ENCODE measurements at regions of chr14 and their contacts with region 1.

Region 1: DNA sequence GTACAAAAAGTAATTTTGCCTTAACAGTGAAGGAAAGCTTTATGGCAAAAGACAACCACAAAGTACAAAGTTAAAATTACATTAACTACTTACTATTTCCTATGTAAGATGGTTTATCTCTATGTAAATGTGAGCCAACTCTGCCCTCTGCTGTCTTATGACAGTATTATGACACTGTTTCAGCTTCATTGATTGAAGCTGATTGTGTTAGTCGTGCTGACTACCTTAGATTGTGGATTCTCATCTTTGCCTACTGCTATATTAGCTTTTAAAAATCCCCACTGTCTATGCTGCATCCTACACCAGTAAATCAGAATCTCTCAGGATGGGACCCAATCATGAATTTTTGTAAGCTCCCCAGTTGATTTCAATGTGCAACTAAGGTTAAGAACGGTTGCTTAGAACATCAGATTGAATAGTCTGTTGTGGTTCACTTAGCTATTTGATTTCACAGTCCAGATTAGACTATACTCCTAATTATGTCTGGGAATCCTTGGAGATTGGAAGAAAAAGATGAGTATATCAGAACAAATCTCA is 12.2 kb upstream of the SPTB start:
- DNase-seq: peak; percentile 43
- H3K4me3 ChIP-seq: no peak overlapping the region
- H3K27ac ChIP-seq: no peak overlapping the region
- H3K4me1 ChIP-seq: no peaks in the 10 kb centered on the region
- H3K27me3 ChIP-seq: peaks cover 2% of the 10 kb centered on the region
- CTCF ChIP-seq: peak; percentile 44 to 59

Region 2: DNA sequence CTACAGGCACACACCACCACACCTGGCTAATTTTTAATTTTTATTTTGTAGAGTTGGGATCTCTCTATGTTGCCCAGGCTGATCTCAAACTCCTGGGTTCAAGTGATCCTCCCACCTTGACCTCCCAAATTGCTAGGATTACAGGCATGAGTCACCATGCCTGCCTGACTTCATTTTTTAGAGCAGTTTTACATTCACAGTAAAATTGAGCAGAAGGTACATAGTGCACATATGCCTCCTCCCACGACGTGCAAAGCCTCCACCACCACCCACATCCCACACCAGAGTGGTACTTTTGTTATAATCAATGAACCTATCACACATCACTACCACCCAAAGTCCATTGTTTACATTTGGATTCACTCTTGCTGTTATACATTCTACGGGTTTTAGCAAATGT is 250.2 kb before region 1 on chr14:
- CTCF ChIA-PET with region 1: interaction called, 13 read pairs
- dilution Hi-C with region 1: no loop called
- in situ Hi-C with region 1: no loop called
- intact Hi-C with region 1: no loop called
- DNase-seq: no peak
- H3K4me3 ChIP-seq: no peak overlapping the region
- H3K27ac ChIP-seq: no peak overlapping the region
- H3K4me1 ChIP-seq: peaks cover 16% of the 10 kb centered on the region
- H3K27me3 ChIP-seq: no peaks in the 10 kb centered on the region
- CTCF ChIP-seq: no peak

Region 3: DNA sequence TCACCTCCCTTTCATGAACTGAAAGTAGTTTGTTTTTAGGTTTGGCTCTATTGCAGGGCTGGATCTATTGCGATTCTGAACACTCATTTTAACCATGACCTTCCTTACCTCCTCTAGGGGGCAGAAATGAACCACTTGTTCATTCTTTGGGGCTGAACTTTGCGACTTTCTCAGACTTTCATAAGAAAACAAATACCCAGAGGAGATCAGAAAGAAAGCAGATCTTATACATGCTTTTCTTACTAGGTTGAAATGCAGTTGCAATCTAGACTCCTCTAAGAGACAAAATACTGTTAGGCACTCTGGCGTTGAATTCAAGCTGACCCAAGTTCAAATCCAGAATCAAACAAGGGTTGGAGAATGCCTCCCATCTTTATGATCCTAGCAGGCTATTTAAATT is 220.3 kb before region 1 on chr14:
- CTCF ChIA-PET with region 1: no interaction called
- dilution Hi-C with region 1: no loop called
- in situ Hi-C with region 1: loop called (anchors 10 to 25 kb)
- intact Hi-C with region 1: loop called (anchors 5 kb)
- DNase-seq: peak; percentile 60
- H3K4me3 ChIP-seq: no peak overlapping the region
- H3K27ac ChIP-seq: no peak overlapping the region
- H3K4me1 ChIP-seq: peaks cover 27% of the 10 kb centered on the region
- H3K27me3 ChIP-seq: no peaks in the 10 kb centered on the region
- CTCF ChIP-seq: peak; percentile 72 to 82

Region 4: DNA sequence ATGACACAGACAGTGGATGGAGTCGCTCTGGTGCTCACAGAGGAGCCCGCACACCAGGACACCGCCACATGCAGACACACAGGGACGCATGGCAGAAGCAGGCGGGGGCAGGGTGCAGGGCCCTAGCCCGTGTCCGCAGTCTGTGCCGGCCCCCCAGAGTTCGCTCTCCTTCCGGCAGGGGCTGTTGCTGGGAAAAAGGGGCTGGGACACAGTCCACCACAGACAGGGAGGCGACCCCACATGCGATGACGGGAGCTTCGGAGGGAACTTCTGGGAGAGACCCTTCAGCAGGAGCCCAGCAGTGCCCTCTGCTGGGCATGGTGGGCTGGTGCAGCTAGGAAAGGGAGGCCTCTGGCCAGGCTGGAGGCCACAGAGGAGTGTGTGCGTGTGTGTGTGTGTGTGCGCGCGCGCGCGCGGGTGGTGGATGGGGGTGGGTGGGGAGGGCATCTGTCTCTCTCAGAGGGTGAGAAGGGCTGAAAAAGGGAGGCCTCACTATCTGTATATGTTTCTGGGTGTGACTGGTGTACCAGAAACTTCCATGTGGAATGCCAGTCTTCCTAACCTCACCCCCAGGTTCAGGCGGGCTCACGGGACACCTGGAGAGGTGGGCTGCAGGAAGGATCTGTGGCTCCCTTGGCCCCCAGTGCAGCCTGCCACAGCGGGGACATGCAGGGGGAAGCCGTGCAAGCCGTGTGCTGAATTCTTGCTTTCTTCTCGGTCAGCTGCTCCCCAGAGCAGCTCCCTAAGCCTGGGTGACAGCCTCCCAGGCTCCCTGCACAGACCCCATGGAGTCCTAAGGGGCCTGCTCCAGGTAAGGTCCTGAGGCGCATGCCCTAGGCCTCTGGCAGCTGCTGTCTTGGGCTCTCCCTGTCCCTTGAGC is 127.0 kb before region 1 on chr14:
- CTCF ChIA-PET with region 1: no interaction called
- dilution Hi-C with region 1: no loop called
- in situ Hi-C with region 1: no loop called
- intact Hi-C with region 1: loop called (anchors 5 kb)
- DNase-seq: peak; percentile 61
- H3K4me3 ChIP-seq: no peak overlapping the region
- H3K27ac ChIP-seq: no peak overlapping the region
- H3K4me1 ChIP-seq: peaks cover 45% of the 10 kb centered on the region
- H3K27me3 ChIP-seq: no peaks in the 10 kb centered on the region
- CTCF ChIP-seq: peak; percentile 80 to 92

Region 5: GRCh38 chr14:64800000-64800399 is 91.9 kb before region 1 on chr14:
- CTCF ChIA-PET with region 1: interaction called, 4 read pairs
- dilution Hi-C with region 1: loop called (anchors 5 kb)
- in situ Hi-C with region 1: no loop called
- intact Hi-C with region 1: loop called (anchors 5 kb)
- DNase-seq: peak; percentile 23
- H3K4me3 ChIP-seq: no peak overlapping the region
- H3K27ac ChIP-seq: no peak overlapping the region
- H3K4me1 ChIP-seq: peaks cover 3% of the 10 kb centered on the region
- H3K27me3 ChIP-seq: no peaks in the 10 kb centered on the region
- CTCF ChIP-seq: peak; percentile 69 to 71

Region 6: GRCh38 chr14:64806202-64806860 is 85.6 kb before region 1 on chr14:
- CTCF ChIA-PET with region 1: interaction called, 4 read pairs
- dilution Hi-C with region 1: loop called (anchors 5 kb)
- in situ Hi-C with region 1: no loop called
- intact Hi-C with region 1: loop called (anchors 5 kb)
- DNase-seq: peak; percentile 80
- H3K4me3 ChIP-seq: no peak overlapping the region
- H3K27ac ChIP-seq: peak overlapping the region; percentile 68
- H3K4me1 ChIP-seq: peaks cover 29% of the 10 kb centered on the region
- H3K27me3 ChIP-seq: no peaks in the 10 kb centered on the region
- CTCF ChIP-seq: no peak

Region 7: GRCh38 chr14:64823305-64823861 is 68.5 kb before region 1 on chr14:
- CTCF ChIA-PET with region 1: interaction called, 21 read pairs
- dilution Hi-C with region 1: no loop called
- in situ Hi-C with region 1: loop called in 1 of 2 experiments (anchors 10 kb)
- intact Hi-C with region 1: loop called (anchors 5 kb)
- DNase-seq: peak; percentile 56
- H3K4me3 ChIP-seq: no peak overlapping the region
- H3K27ac ChIP-seq: no peak overlapping the region
- H3K4me1 ChIP-seq: peaks cover 9% of the 10 kb centered on the region
- H3K27me3 ChIP-seq: peaks cover 4% of the 10 kb centered on the region
- CTCF ChIP-seq: peak; percentile 53 to 86

Region 8: DNA sequence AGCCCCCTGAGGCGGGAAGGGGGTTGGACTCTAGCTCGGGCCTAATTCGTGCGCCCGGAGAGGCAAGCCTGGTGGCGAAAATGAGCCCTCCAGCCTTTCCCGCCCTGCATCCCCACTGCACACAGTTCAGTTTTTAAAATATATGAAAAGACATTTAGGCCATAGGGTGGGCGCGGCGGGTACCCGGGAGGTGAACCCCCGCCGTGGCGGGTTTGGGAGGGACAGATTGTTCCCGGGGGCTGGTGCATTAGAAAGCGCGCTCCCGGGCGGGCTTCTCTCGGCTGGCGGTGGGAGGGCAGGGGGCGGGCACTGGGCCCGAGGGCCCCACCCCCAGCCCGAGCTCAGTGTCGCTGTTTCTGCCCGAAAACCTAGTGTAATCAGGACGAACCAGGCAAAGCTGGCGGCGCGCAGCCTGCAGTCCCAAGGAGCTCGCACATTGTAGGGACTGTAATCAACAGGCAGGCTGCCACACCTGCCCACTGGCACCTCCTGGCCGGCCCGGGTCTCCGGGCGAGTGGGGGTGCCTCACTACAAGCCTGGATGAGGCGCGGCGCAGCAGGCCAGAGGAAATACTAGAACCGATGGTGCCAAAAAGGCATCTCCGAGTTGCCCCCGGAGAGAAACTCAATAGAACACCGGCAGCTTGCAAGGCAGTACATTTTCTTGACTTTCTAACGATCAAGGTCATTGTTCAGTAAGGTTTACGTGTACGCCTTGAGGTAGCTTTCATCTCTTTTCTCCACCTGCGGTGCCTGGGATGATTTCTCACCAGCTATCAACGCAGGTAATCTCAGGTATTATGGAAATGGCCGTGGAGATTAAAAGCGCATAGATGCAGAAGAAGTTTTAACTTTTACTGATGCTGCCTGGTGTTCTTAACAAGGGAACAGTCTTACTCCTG is 11.4 kb before region 1 on chr14:
- CTCF ChIA-PET with region 1: no interaction called
- dilution Hi-C with region 1: no loop called
- in situ Hi-C with region 1: no loop called
- intact Hi-C with region 1: no loop called
- DNase-seq: peak; percentile 9
- H3K4me3 ChIP-seq: peak overlapping the region; percentile 28 to 45 (median 31)
- H3K27ac ChIP-seq: no peak overlapping the region
- H3K4me1 ChIP-seq: peaks cover 12% of the 10 kb centered on the region
- H3K27me3 ChIP-seq: peaks cover 27% of the 10 kb centered on the region
- CTCF ChIP-seq: no peak